Activated CD4-positive, alpha-beta T cell treated with anti-CD3 and anti-CD28 coated beads, Interleukin-2, amount 10 ng/mL, durations not matched to agents 24 days and 14 days (primary cell): ENCODE measurements at regions of chr15 and their contacts with region 1.

Region 1: GRCh38 chr15:74695597-74696397 is at the start of gene EDC3:
- DNase-seq: peak; percentile 96
- H3K4me3 Mint-ChIP-seq: peak within 1 kb of the TSS; percentile 98
- H3K27ac Mint-ChIP-seq: peak within 1 kb of the TSS; percentile 99
- H3K4me1 Mint-ChIP-seq: peaks cover 27% of the 10 kb centered on the region
- H3K27me3 Mint-ChIP-seq: no peaks in the 10 kb centered on the region
- total RNA-seq, gene EDC3: 45.7 and 50.2 TPM in 2 replicates

Region 2: GRCh38 chr15:74723754-74724334 is 28.0 kb after region 1 on chr15:
- intact Hi-C with region 1: loop called (anchors 2 kb)
- DNase-seq: peak; percentile 68
- H3K4me3 Mint-ChIP-seq: no peak overlapping the region
- H3K27ac Mint-ChIP-seq: no peak overlapping the region
- H3K4me1 Mint-ChIP-seq: peaks cover 9% of the 10 kb centered on the region
- H3K27me3 Mint-ChIP-seq: peaks cover 25% of the 10 kb centered on the region